MCF 10A (cell line): ENCODE measurements at regions of chr1 and their contacts with region 1.

Region 1: GRCh38 chr1:168234846-168235547 is 9.2 kb downstream of the SFT2D2 start:
- DNase-seq: peak; percentile 84
- H3K4me3 Mint-ChIP-seq: no peak overlapping the region
- H3K27ac Mint-ChIP-seq: no peak overlapping the region
- H3K4me1 Mint-ChIP-seq: peaks cover 24% of the 10 kb centered on the region
- H3K27me3 Mint-ChIP-seq: no peaks in the 10 kb centered on the region
- CTCF ChIP-seq: peak; percentile 81

Region 2: GRCh38 chr1:168172250-168172915 is 62.6 kb before region 1 on chr1:
- CTCF ChIA-PET with region 1: no interaction called
- POLR2A ChIA-PET with region 1: no interaction called
- intact Hi-C with region 1: no loop called
- DNase-seq: no peak
- H3K4me3 Mint-ChIP-seq: no peak overlapping the region
- H3K27ac Mint-ChIP-seq: no peak overlapping the region
- H3K4me1 Mint-ChIP-seq: no peaks in the 10 kb centered on the region
- H3K27me3 Mint-ChIP-seq: no peaks in the 10 kb centered on the region
- CTCF ChIP-seq: no peak

Region 3: GRCh38 chr1:168187177-168187576 is 47.8 kb before region 1 on chr1:
- CTCF ChIA-PET with region 1: interaction called, 18 read pairs
- POLR2A ChIA-PET with region 1: interaction called, 5 read pairs
- intact Hi-C with region 1: no loop called
- DNase-seq: no peak
- H3K4me3 Mint-ChIP-seq: no peak overlapping the region
- H3K27ac Mint-ChIP-seq: peak overlapping the region; percentile 4
- H3K4me1 Mint-ChIP-seq: peaks cover 9% of the 10 kb centered on the region
- H3K27me3 Mint-ChIP-seq: no peaks in the 10 kb centered on the region
- CTCF ChIP-seq: no peak

Region 4: DNA sequence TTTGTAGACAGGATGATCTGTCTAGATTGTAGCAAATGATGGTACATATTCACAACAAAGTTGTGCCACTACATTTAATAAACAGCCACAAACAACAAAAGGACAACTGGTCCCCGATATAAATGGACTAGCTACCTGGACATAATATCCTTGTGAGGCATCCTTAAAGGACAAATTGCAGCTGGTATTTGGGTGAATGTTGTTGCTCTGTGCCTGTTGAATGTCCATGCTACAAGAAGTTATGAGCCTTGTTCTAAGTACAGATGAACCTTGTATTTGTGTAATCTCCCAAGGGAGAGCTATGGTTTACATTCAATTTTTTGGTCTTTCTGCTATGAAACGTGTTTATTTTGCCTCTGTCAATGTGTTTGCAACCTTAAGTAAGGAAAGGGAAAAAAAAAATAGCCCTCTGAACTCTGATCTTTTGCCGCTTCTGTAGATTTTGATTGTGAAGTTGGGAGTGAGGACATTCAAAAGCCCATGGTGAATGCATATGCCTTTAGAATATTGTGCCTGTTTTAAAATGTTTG is 17.3 kb after region 1 on chr1:
- CTCF ChIA-PET with region 1: interaction called, 40 read pairs
- POLR2A ChIA-PET with region 1: interaction called, 5 read pairs
- intact Hi-C with region 1: no loop called
- DNase-seq: no peak
- H3K4me3 Mint-ChIP-seq: no peak overlapping the region
- H3K27ac Mint-ChIP-seq: no peak overlapping the region
- H3K4me1 Mint-ChIP-seq: no peaks in the 10 kb centered on the region
- H3K27me3 Mint-ChIP-seq: no peaks in the 10 kb centered on the region
- CTCF ChIP-seq: no peak

Region 5: DNA sequence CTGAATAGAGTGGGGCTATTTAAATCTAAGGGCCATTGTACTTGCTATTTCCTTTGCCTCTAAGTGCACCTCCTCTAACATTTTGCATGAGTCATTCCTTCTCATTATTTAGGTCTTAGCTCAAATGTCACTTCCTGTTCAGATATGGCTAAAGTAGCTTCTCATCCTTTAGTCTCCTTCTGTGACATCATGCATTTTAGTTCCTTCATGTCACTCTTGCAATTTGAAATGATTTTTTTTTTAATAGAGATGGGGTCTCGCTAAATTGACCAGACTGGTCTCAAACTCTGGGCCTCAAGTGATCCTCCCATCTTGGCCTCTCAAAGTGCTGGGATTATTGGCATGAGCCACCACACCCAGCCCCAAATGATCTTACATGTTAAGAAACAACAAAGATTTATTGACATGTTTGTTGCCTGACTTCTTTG is 52.3 kb after region 1 on chr1:
- CTCF ChIA-PET with region 1: interaction called, 21 read pairs
- POLR2A ChIA-PET with region 1: interaction called, 5 read pairs
- intact Hi-C with region 1: no loop called
- DNase-seq: peak; percentile 58
- H3K4me3 Mint-ChIP-seq: no peak overlapping the region
- H3K27ac Mint-ChIP-seq: no peak overlapping the region
- H3K4me1 Mint-ChIP-seq: peaks cover 37% of the 10 kb centered on the region
- H3K27me3 Mint-ChIP-seq: no peaks in the 10 kb centered on the region
- CTCF ChIP-seq: no peak

Region 6: GRCh38 chr1:168312718-168313604 is 78.0 kb after region 1 on chr1:
- CTCF ChIA-PET with region 1: interaction called, 29 read pairs
- POLR2A ChIA-PET with region 1: interaction called, 5 read pairs
- intact Hi-C with region 1: no loop called
- DNase-seq: no peak
- H3K4me3 Mint-ChIP-seq: no peak overlapping the region
- H3K27ac Mint-ChIP-seq: no peak overlapping the region
- H3K4me1 Mint-ChIP-seq: no peaks in the 10 kb centered on the region
- H3K27me3 Mint-ChIP-seq: no peaks in the 10 kb centered on the region
- CTCF ChIP-seq: no peak

Region 7: DNA sequence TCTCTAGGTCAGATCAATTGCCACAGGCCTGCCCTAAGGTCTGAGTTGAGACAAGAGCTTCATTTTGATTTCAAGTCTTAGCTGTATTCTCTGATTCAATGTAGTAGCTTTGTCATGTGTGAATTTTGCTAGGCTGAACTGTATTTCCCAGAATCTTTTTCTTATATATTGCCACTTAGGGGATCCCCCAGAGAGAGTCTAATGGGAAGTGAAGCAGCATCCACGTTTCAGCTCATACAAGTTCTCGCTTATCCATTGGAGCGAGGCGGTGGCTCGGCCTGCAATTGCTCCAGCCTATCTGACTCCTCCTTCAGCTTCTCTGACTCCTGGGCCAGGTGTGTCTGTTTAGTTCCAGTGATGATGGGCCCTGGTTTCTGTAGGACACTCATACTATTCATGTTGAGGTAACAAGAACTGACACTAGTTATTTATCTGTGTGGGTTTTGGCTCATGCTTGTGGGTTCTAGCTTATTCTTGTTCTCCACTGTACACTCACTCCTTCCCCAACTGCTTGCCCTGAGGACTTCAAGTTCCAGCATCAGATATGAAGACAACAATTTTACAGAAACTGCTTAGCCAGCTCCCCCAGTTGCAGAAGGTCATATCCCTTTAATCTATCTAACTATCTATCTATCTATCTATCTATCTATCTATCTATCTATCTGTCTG is 93.9 kb after region 1 on chr1:
- CTCF ChIA-PET with region 1: interaction called, 94 read pairs
- POLR2A ChIA-PET with region 1: no interaction called
- intact Hi-C with region 1: no loop called
- DNase-seq: no peak
- H3K4me3 Mint-ChIP-seq: no peak overlapping the region
- H3K27ac Mint-ChIP-seq: no peak overlapping the region
- H3K4me1 Mint-ChIP-seq: no peaks in the 10 kb centered on the region
- H3K27me3 Mint-ChIP-seq: no peaks in the 10 kb centered on the region
- CTCF ChIP-seq: no peak

Region 8: DNA sequence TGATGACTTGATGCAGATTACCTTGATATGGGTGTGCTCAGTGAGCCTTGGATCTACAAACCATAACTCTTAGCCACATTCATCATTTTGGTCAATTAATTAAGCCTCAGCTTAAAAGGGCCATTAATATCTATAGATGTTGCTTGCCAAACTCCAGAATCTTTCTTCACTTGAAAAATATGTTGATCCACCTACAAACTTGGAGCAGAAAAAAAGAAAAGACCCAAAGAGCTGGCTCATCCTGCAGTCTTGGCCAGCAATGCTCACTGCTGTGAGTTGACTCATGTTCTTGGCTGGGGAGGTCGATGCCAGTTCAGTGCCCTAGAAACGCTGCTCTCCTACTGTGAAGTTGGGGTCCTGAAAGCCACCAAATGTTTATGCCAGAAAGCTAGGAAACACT is 418.6 kb after region 1 on chr1:
- CTCF ChIA-PET with region 1: no interaction called
- POLR2A ChIA-PET with region 1: no interaction called
- intact Hi-C with region 1: no loop called
- DNase-seq: peak; percentile 61
- H3K4me3 Mint-ChIP-seq: no peak overlapping the region
- H3K27ac Mint-ChIP-seq: peak overlapping the region; percentile 1
- H3K4me1 Mint-ChIP-seq: peaks cover 20% of the 10 kb centered on the region
- H3K27me3 Mint-ChIP-seq: no peaks in the 10 kb centered on the region
- CTCF ChIP-seq: no peak

Region 9: DNA sequence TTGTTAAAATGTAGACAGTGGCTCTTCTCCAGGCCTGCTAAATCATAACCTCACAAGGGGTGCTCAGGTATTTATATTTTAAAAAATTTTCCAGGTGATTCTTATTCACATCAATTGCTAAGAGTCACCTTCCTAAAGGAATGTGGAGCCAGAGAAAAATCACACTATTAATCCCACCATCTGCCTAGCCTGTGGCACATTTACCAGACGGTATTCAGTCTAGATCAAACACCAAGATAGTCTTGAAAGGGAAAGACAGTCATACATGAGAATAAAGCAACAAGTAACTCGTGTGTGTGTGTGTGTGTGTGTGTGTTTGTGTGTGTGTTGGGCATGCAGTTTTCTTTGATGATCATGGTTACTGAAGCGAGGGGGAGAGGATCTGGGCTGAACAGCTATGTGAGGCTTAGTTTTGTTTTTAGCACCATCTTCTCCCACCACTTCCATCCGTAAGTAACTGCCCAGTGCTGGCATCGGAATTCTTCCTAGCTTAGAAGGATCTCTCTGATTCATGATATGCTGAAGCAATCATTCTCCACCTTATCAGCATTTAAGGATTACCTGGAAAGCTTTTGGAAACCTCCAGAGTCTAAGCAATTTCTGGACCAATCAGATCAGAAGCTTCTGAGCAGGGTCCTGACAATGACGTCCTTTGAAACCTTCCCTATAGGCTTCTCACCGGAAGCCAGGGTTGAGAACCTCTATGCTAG is 496.4 kb after region 1 on chr1:
- CTCF ChIA-PET with region 1: no interaction called
- POLR2A ChIA-PET with region 1: no interaction called
- intact Hi-C with region 1: no loop called
- DNase-seq: no peak
- H3K4me3 Mint-ChIP-seq: no peak overlapping the region
- H3K27ac Mint-ChIP-seq: no peak overlapping the region
- H3K4me1 Mint-ChIP-seq: peaks cover 16% of the 10 kb centered on the region
- H3K27me3 Mint-ChIP-seq: no peaks in the 10 kb centered on the region
- CTCF ChIP-seq: no peak

Region 10: GRCh38 chr1:169288011-169288414 is 1053.0 kb after region 1 on chr1:
- CTCF ChIA-PET with region 1: no interaction called
- POLR2A ChIA-PET with region 1: no interaction called
- intact Hi-C with region 1: no loop called
- DNase-seq: peak; percentile 18
- H3K4me3 Mint-ChIP-seq: no peak overlapping the region
- H3K27ac Mint-ChIP-seq: no peak overlapping the region
- H3K4me1 Mint-ChIP-seq: peaks cover 17% of the 10 kb centered on the region
- H3K27me3 Mint-ChIP-seq: no peaks in the 10 kb centered on the region
- CTCF ChIP-seq: no peak